ENCODE measurements at regions of chr20 and their contacts with region 1.

Region 1: DNA sequence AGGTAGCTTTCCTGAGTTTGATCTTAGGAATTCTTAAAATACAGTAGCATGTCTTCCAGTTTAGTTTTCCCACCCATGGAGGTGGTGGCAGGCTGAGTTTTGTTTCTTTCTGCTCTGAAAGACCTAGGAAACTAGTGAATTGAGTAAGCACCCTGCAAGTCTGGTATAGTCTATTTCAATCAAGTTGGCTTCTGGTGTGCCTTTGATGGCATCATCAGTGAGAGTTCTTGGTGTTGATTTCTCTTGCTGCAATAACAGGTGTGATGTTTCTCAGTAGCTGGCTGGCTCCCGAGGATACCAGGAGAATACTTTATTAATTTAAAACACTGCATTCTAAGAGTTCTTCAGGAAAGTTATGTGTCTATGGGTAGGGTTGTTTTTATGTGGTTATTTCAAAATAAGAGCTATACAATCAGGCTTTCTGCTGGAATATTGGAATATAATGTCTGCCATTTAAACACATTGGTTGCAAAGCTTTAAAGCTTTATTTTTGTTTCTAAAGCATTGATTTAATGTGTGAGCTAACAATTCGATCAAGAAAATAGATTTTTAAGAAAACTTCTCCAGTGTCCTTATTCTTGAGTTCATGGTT is 19.0 kb downstream of the VAPB start:
- DNase-seq: peak in 17 of 35 experiments; percentile 6 to 44 (median 18)
- ATAC-seq: peak; percentile 55 to 78 (median 60)
- H3K4me3 ChIP-seq: no peak overlapping the region
- H3K4me3 Mint-ChIP-seq: peak overlapping the region; percentile 43 to 58 (median 45)
- H3K27ac ChIP-seq: peak overlapping the region; percentile 55
- H3K27ac Mint-ChIP-seq: peak overlapping the region; percentile 77 to 79
- H3K4me1 ChIP-seq: peaks cover 8 to 28% of the 10 kb centered on the region in 2 experiments
- H3K4me1 Mint-ChIP-seq: peaks cover 33 to 47% (median 40%) of the 10 kb centered on the region in 3 donors
- H3K27me3 ChIP-seq: no peaks in the 10 kb centered on the region
- H3K27me3 Mint-ChIP-seq: no peaks in the 10 kb centered on the region

Region 2: GRCh38 chr20:58388882-58389323 is 19.2 kb before region 1 on chr20 and contains the start of gene VAPB:
- CTCF ChIA-PET with region 1: interaction called in 1 of 2 experiments, 5 read pairs
- POLR2A ChIA-PET with region 1: interaction called in 1 of 2 experiments, 21 read pairs
- DNase-seq: peak; percentile 91 to 99 (median 96)
- ATAC-seq: peak; percentile 97 to 99 (median 99)
- H3K4me3 ChIP-seq: peak within 1 kb of the TSS; percentile 80 to 92
- H3K4me3 Mint-ChIP-seq: peak within 1 kb of the TSS; percentile 82 to 94 (median 91)
- H3K27ac ChIP-seq: peak within 1 kb of the TSS; percentile 99
- H3K27ac Mint-ChIP-seq: peak within 1 kb of the TSS; percentile 92 to 93
- H3K4me1 ChIP-seq: peaks cover 19 to 32% of the 10 kb centered on the region in 2 experiments
- H3K4me1 Mint-ChIP-seq: peaks cover 40 to 52% (median 44%) of the 10 kb centered on the region in 3 donors
- H3K27me3 ChIP-seq: peaks cover 0 to 12% of the 10 kb centered on the region in 2 experiments
- H3K27me3 Mint-ChIP-seq: peaks cover 3 to 5% of the 10 kb centered on the region in 2 donors
- total RNA-seq, gene VAPB: 26.4 to 35.0 (median 30.8) TPM

Region 3: DNA sequence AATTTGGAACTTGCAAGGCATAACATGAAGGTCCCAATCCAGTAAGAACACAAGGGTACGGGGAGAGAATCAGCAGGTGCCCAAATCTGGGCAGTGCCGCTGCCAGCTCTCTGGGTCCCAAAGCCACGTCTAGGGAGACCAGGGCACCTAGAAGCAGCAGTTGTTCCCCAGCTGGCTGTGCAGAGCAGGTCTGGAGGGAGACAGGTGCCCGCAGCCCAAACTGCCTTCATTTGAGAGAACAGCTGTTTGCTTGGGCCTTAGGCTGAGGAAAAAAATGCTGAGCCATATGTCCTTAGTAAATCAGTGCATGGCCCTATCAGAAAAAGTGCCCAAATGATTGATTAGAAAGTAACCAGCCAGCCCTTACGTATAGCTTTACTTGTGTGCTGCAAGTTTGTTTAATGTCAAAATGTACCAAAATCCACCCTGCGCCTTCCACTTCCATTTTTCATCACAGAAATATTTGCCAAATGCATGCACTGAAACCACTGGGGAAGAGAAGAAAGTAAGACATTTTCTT is 643.7 kb after region 1 on chr20:
- CTCF ChIA-PET with region 1: no interaction called
- POLR2A ChIA-PET with region 1: interaction called in 1 of 2 experiments, 10 read pairs
- DNase-seq: no peak
- ATAC-seq: no peak
- H3K4me3 ChIP-seq: no peak overlapping the region
- H3K4me3 Mint-ChIP-seq: no peak overlapping the region
- H3K27ac ChIP-seq: no peak overlapping the region
- H3K27ac Mint-ChIP-seq: no peak overlapping the region
- H3K4me1 ChIP-seq: no peaks in the 10 kb centered on the region
- H3K4me1 Mint-ChIP-seq: peaks cover 6 to 10% (median 6%) of the 10 kb centered on the region in 3 donors
- H3K27me3 ChIP-seq: peaks cover 0 to 9% of the 10 kb centered on the region in 2 experiments
- H3K27me3 Mint-ChIP-seq: peaks cover 13 to 32% of the 10 kb centered on the region in 2 donors

Measured in T-cell (primary cell).